ENCODE measurements at regions of chr6 and their contacts with region 1.

Region 1: DNA sequence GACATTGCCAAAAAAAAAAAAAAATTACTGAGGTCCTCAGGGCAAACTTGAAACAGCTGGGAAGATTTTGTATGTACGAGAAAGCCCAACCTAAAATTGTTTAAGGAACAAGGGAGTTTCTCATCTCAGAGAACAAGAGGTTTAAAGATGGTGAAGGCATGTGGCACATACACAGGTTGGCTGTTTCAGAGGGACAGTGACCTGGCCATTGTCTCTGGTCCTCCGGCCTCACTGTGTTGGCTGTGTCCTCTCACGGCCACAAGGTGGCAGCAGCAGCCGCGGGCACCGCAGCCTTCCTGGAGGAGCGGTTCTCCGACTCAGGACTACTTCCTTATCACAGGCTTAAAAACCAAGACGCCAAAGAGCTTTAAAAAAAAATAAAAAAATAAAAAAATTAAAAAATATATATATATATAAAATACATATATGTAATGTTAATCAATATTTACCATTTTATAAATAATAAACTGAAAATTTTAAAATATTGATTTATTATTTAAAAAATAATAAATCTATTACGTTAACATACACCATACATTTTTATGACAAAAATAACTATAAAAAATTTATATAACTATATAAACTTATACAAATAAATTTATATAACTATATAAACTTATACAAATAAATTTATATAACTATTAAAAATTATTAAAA is 52.8 kb downstream of the GTF2H5 start:
- DNase-seq: peak; percentile 82
- ATAC-seq: peak; percentile 98
- H3K4me3 ChIP-seq: no peak overlapping the region
- H3K27ac ChIP-seq: no peak overlapping the region
- H3K4me1 ChIP-seq: no peaks in the 10 kb centered on the region
- H3K27me3 ChIP-seq: no peaks in the 10 kb centered on the region
- CTCF ChIP-seq: peak; percentile 74

Region 2: DNA sequence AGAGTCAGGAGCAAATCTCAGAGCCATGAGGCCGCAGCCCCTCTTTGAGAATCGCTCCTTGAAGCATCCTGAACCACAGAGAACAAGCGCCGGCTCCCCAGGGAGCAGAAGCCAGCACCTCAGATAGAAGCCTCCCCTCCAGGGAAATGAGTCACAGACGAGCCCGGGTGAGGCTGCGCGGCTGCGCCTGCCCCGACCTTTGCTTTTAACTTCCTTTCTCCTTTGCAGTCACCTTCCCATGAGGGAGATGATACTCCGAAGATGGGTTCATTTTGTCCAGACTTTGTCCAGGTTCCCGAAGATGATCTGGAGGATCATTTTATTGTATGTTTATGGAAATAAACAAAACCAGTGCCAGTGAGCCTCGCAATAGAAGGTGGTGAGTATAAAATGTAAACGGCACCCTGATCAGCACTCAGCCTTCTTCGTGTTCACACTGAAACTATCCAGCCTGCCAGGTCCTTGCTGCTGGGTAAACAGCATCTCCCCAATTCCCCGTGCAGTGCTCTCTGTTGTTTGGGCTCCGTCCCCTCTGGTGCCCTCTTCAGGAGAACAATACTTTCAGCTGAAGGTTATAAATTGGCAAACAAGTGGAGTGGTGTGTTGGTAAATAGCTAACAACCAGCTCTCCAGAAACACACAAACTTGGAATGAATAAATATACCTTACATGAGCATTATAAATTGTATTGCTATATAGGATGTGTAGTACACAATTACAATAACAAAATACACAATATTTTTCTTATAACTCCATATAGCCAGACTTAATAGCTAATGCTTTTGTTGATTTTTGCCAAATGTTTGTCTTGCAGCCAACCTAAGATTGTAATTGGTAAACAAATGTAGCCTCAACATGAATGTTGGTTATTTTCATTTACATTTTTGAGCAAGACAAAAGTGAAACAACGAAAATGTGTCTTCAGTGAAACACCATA is 297.5 kb after region 1 on chr6:
- CTCF ChIA-PET with region 1: interaction called, 4 read pairs
- POLR2A ChIA-PET with region 1: no interaction called
- intact Hi-C with region 1: loop called (anchors 1 kb)
- DNase-seq: peak; percentile 71
- ATAC-seq: peak; percentile 95
- H3K4me3 ChIP-seq: peak overlapping the region; percentile 65
- H3K27ac ChIP-seq: peak overlapping the region; percentile 47
- H3K4me1 ChIP-seq: peaks cover 6% of the 10 kb centered on the region; the same call in 1 of the 2 replicates
- H3K27me3 ChIP-seq: no peaks in the 10 kb centered on the region
- CTCF ChIP-seq: peak; percentile 73

Region 3: DNA sequence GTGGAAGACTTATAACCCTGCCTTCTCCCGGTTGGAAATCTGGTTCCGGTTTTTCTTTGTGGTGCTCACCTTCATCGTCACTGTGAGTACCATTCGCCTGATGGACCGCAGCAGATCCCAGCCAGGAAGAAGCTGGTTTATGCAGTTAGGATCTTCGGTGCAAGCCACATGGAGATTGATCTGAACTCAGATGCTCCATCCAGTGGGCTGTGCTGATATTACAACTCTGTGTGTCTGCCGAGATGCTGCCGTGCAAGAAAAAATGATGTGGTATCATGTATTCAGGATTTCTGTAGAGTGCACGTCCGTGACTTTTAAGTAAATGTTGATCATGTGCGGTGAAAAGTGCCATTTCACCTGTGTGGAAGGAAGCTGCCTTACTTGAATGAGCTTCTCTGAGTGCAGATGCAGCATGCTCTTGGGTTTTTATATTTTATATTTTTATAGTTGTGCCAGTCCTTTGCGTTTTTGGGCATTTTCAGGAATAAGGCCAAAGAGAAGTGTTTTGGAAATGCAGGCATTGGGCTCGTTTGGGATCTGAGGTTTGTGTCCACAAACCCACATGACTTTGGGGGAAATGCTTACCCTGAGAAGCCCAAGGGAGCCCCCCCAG is 384.5 kb after region 1 on chr6:
- CTCF ChIA-PET with region 1: no interaction called
- POLR2A ChIA-PET with region 1: no interaction called
- intact Hi-C with region 1: loop called (anchors 1 kb)
- DNase-seq: peak; percentile 70
- ATAC-seq: peak; percentile 67
- H3K4me3 ChIP-seq: no peak overlapping the region
- H3K27ac ChIP-seq: no peak overlapping the region
- H3K4me1 ChIP-seq: no peaks in the 10 kb centered on the region
- H3K27me3 ChIP-seq: no peaks in the 10 kb centered on the region
- CTCF ChIP-seq: peak; percentile 71

Region 4: GRCh38 chr6:158853072-158853871 is 632.4 kb after region 1 on chr6:
- CTCF ChIA-PET with region 1: no interaction called
- POLR2A ChIA-PET with region 1: no interaction called
- intact Hi-C with region 1: no loop called
- DNase-seq: peak; percentile 98
- ATAC-seq: peak; percentile 69
- H3K4me3 ChIP-seq: peak overlapping the region; percentile 26; the same call in 1 of the 2 replicates
- H3K27ac ChIP-seq: peak overlapping the region; percentile 99
- H3K4me1 ChIP-seq: peaks cover 61% of the 10 kb centered on the region
- H3K27me3 ChIP-seq: no peaks in the 10 kb centered on the region
- CTCF ChIP-seq: no peak

Measured in PC-3 (cell line).